Pancreas (tissue), 10 donors: ENCODE measurements at regions of chr7 and their contacts with region 1.

Region 1: DNA sequence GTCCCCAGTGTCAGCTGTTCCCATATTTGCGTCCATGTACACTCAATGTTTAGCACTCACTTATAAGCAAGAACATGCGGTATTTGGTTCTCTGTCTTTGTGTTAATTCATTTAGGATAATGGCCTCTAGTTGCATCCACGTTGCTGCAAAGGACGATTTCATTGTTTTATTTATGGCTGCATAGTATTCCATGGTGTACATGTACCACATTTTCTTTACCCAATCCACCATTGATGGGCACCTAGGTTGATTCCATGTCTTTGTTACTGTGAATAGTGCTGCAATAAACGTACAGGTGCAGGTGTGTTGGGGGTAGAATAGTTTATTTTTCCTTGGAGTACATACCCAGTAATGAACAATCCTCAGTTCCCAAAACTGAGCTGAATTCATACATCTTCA is 24.3 kb upstream of the TRIM56 start:
- DNase-seq: no peak
- ATAC-seq: no peak
- H3K4me3 ChIP-seq: no peak overlapping the region
- H3K27ac ChIP-seq: no peak overlapping the region
- H3K4me1 ChIP-seq: no peaks in the 10 kb centered on the region
- H3K27me3 ChIP-seq: peaks cover 0 to 4% (median 0%) of the 10 kb centered on the region in 4 donors
- CTCF ChIP-seq: no peak

Region 2: DNA sequence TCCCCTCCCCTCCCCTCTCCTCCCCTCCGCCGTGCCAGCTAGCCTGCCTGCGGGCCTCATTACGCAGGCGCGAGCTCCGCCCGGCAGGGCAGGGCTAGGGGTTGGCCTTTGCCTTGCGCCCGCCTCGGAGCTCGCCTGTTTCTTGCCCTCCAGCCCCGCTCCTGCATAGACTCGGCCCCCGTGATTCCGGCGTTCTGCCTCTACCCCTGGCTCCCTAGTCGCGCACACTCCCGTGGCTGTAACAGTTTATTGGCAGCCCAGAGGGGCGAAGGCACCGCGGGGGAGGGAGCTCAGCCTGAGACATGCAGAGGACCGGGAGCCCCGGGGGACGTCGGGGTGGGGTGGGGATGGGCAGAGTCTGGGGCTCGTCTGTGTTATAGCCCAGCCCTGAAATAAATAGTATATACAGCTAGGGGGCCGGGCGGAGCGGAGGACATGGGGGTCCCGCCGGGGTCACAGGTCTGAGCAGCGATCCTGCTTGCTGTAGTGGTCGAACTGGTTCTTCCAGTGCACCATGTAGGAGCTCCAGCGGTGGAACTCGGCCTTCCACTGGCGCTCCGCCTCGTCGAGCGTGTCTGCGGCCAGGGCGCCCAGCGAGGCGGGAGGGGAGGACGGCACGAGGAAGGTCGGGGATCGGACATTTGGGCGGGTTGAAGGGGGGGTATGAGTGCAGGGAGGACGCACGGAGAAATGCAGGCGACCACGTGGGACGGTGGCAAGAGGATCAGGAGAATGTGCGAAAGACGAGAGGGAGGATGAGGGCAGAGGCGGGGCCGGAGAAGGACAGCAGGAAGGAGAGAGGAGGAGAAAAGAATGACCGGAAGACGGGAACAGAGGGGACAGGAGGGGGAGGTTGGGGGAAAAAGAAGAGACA is 171.0 kb before region 1 on chr7:
- intact Hi-C with region 1: loop called in 2 of 3 experiments (anchors 5 to 10 kb)
- DNase-seq: peak; percentile 91 to 99 (median 95)
- ATAC-seq: peak; percentile 88 to 94 (median 90)
- H3K4me3 ChIP-seq: peak overlapping the region; percentile 23 to 73 (median 55)
- H3K27ac ChIP-seq: peak overlapping the region; percentile 75 to 94 (median 84)
- H3K4me1 ChIP-seq: peaks cover 1 to 11% (median 10%) of the 10 kb centered on the region in 3 donors
- H3K27me3 ChIP-seq: no peaks in the 10 kb centered on the region
- CTCF ChIP-seq: no peak

Region 3: DNA sequence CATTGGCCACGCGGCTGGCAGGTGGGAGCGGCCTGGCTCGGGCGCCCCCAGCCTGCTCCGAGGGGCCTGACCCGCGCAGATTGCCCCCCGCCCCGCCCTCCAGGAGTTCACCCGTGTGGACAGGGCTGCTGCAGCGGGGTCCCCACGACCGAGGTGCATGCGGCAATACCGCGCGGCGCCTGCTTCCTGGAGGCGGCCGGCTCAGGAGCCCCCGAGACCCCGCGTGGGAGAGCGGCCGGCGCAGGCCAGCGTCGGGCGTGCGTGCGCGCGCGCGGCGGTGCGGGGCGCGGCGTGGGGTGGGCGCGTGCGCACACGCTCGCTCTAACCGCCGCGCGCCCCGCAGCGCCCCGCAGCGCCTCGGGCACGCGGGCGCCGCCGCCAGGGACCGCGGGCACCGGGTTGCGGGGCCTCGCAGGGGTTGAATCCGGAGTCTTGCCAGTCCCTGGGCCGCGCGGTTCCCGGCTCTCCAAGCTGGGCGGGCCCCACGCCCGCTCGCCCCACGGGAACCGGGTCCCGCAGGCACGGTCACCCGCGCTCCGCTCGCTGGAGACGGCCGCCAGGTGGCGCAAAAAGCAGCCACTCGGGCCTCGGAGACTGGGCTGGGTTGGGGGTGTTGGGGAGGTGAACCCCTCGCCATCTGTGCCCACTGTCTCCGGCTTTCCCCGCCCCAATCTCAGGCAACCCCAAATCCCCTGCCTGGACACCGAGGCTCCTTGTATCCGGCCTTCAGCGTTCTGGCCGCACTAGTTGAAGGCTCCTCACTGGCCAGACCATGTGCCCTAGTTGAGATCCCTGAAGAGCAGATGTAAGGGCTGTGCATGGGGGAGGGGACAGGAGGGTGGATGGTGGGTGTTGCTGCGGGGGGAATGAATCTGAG is 164.0 kb before region 1 on chr7:
- intact Hi-C with region 1: loop called (anchors 2 to 10 kb)
- DNase-seq: peak; percentile 12 to 86 (median 74)
- ATAC-seq: peak; percentile 29 to 56 (median 49)
- H3K4me3 ChIP-seq: peak overlapping the region in 2 of 4 donors; percentile 60 to 67
- H3K27ac ChIP-seq: peak overlapping the region in 2 of 4 donors; percentile 33 to 72
- H3K4me1 ChIP-seq: peaks cover 0 to 16% (median 5%) of the 10 kb centered on the region in 3 donors
- H3K27me3 ChIP-seq: no peaks in the 10 kb centered on the region
- CTCF ChIP-seq: peak; percentile 47 to 77 (median 67)

Region 4: GRCh38 chr7:101333912-101334311 is 272.9 kb after region 1 on chr7:
- intact Hi-C with region 1: no loop called
- DNase-seq: no peak
- ATAC-seq: no peak
- H3K4me3 ChIP-seq: no peak overlapping the region
- H3K27ac ChIP-seq: no peak overlapping the region
- H3K4me1 ChIP-seq: no peaks in the 10 kb centered on the region
- H3K27me3 ChIP-seq: no peaks in the 10 kb centered on the region
- CTCF ChIP-seq: no peak